Caco-2 (cell line): ENCODE measurements at regions of chr2 and their contacts with region 1.

Region 1: DNA sequence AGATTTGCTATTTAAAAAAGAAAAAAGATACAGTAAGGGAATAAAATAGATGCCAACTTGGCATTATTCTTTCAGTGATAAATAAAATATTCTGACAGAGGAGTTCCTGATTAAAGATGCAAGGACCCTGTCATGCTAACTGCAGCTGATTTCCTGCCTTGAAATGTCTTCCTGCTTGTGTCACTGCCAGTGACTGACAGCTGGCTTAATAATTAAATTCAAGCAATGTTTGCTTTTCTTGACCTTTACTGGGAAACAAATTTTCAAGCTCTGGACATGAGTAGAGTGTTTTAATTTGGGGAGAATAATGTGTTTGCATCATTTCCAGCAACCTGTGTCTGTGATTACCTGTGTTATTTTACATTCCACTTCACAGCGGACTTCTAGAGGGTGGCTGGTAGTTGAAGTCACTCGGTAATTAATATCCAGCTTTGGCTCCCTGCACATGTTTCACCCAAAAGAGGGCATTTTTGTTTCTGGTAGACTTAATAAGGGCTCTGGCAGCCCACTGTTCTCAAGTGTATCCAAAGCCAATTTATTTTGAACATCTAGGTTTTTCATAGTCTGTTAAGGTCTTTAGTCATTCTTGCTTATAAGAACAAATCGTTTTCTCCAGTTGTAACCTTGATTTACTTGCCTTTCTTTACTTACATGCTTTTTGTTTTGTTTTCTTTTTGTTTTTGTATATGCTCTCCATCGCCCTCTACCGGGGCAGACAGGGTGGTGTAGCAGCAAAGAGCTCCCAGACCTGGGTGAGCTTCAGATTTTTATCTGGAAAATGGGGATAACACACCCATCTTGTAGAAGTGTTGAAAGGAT is 48.5 kb upstream of the PROKR1 start:
- DNase-seq: peak; percentile 37 to 61
- H3K4me3 ChIP-seq: no peak overlapping the region
- H3K4me3 Mint-ChIP-seq: peak overlapping the region; percentile 6
- H3K27ac Mint-ChIP-seq: no peak overlapping the region
- H3K4me1 ChIP-seq: peaks cover 9% of the 10 kb centered on the region
- H3K4me1 Mint-ChIP-seq: peaks cover 7% of the 10 kb centered on the region
- H3K27me3 ChIP-seq: no peaks in the 10 kb centered on the region
- H3K27me3 Mint-ChIP-seq: no peaks in the 10 kb centered on the region
- CTCF ChIP-seq: peak; percentile 71 to 72

Region 2: GRCh38 chr2:68646302-68646701 is 51.4 kb after region 1 on chr2:
- CTCF ChIA-PET with region 1: interaction called, 6 read pairs
- POLR2A ChIA-PET with region 1: no interaction called
- intact Hi-C with region 1: loop called (anchors 5 kb)
- DNase-seq: peak in 1 of 2 experiments; percentile 19
- H3K4me3 ChIP-seq: no peak overlapping the region
- H3K4me3 Mint-ChIP-seq: no peak overlapping the region
- H3K27ac Mint-ChIP-seq: no peak overlapping the region
- H3K4me1 ChIP-seq: no peaks in the 10 kb centered on the region
- H3K4me1 Mint-ChIP-seq: no peaks in the 10 kb centered on the region
- H3K27me3 ChIP-seq: peaks cover 5% of the 10 kb centered on the region
- H3K27me3 Mint-ChIP-seq: peaks cover 44% of the 10 kb centered on the region
- CTCF ChIP-seq: peak in 1 of 2 experiments; percentile 27

Region 3: DNA sequence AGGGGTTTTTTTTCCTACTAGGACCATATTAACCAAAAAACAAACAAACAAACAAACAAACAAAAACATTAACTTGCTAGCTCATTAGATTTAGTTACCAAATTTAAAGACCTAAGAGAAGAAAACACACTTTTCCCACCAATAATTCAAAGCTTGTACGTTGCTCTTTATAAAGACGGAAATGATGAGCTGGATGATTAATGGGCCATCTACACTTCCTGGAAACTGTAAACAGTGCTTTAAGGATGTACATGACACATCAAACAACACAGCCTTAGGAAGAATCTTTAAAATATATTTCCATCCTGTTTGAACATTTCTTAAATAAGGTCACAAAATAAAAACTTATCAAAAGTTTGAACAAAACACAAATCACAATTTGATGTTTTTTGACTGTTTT is 275.3 kb after region 1 on chr2:
- CTCF ChIA-PET with region 1: no interaction called
- POLR2A ChIA-PET with region 1: no interaction called
- intact Hi-C with region 1: no loop called
- DNase-seq: no peak
- H3K4me3 ChIP-seq: no peak overlapping the region
- H3K4me3 Mint-ChIP-seq: no peak overlapping the region
- H3K27ac Mint-ChIP-seq: no peak overlapping the region
- H3K4me1 ChIP-seq: no peaks in the 10 kb centered on the region
- H3K4me1 Mint-ChIP-seq: no peaks in the 10 kb centered on the region
- H3K27me3 ChIP-seq: no peaks in the 10 kb centered on the region; the same call in 1 of the 2 replicates
- H3K27me3 Mint-ChIP-seq: no peaks in the 10 kb centered on the region
- CTCF ChIP-seq: no peak